ENCODE measurements at regions of chrX and their contacts with region 1.

Region 1: GRCh38 chrX:107716816-107717700 is 58.5 kb downstream of the TSC22D3 start:
- DNase-seq: peak; percentile 64
- ATAC-seq: peak; percentile 71
- H3K4me3 ChIP-seq: peak overlapping the region; percentile 81
- H3K27ac ChIP-seq: peak overlapping the region; percentile 86
- H3K4me1 ChIP-seq: peaks cover 17% of the 10 kb centered on the region
- H3K27me3 ChIP-seq: no peaks in the 10 kb centered on the region; a peak in 1 of 4 replicates
- CTCF ChIP-seq: no peak
- EP300 ChIP-seq: peak; percentile 56 to 73; a peak in 2 of 4 replicates
- POLR2A ChIP-seq: peak; percentile 98
- RAD21 ChIP-seq: no peak

Region 2: DNA sequence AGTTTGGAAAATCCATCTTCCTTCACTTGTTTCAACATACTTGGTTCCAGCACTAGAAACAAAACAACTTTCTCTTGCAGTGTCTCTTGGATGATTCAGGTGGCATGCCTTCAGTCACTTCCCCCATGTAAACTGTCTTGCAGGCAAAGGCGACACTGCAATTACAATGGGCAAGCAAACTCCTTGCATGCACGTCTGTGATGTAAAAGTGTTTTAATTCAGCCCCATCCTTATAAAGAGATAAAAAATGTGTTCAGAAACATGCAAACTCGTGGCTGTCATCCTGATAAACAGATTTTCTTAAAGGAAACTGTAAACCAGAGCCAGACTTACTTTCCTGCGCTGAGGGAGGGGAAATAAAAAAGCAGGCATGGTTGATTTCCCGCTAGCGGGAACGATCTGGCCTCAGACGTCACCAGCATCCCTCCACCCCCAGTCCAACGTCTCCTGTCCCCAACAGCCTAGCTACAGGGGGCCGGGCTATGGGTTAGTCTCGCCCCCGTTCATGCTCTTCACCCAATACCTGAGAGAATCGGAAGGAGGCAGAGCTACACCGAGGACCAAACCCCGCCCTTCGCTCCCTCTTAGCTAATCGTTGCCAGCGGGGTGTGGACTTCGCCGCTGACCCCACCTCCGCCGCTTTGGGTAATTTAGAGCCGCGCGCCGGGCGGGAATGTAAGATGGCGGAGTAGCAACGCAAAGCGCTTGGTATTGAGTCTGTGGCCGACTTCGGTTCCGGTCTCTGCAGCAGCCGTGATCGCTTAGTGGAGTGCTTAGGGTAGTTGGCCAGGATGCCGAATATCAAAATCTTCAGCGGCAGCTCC is 89.0 kb before region 1 on chrX and contains the start of gene PRPS1:
- CTCF ChIA-PET with region 1: no interaction called
- POLR2A ChIA-PET with region 1: no interaction called
- RAD21 ChIA-PET with region 1: interaction called, 12 read pairs
- SMC1A ChIA-PET with region 1: interaction called, 6 read pairs
- in situ Hi-C with region 1: no loop called
- intact Hi-C with region 1: no loop called
- DNase-seq: peak; percentile 75
- ATAC-seq: peak; percentile 98
- H3K4me3 ChIP-seq: peak within 1 kb of the TSS; percentile 74
- H3K27ac ChIP-seq: peak within 1 kb of the TSS; percentile 73
- H3K4me1 ChIP-seq: no peaks in the 10 kb centered on the region
- H3K27me3 ChIP-seq: no peaks in the 10 kb centered on the region
- CTCF ChIP-seq: no peak
- EP300 ChIP-seq: no peak
- POLR2A ChIP-seq: peak; percentile 83
- RAD21 ChIP-seq: no peak
- polyA plus RNA-seq, gene PRPS1: 31.2 to 31.5 TPM

Region 3: GRCh38 chrX:107672955-107673378 is 44.1 kb before region 1 on chrX:
- CTCF ChIA-PET with region 1: interaction called, 273 read pairs
- POLR2A ChIA-PET with region 1: interaction called, 287 read pairs
- RAD21 ChIA-PET with region 1: interaction called, 444 read pairs
- SMC1A ChIA-PET with region 1: interaction called, 425 read pairs
- in situ Hi-C with region 1: loop called (anchors 5 kb)
- intact Hi-C with region 1: loop called (anchors 1 kb)
- DNase-seq: no peak
- ATAC-seq: peak; percentile 61
- H3K4me3 ChIP-seq: no peak overlapping the region
- H3K27ac ChIP-seq: peak overlapping the region; percentile 57
- H3K4me1 ChIP-seq: peaks cover 16% of the 10 kb centered on the region
- H3K27me3 ChIP-seq: no peaks in the 10 kb centered on the region
- CTCF ChIP-seq: peak; percentile 72 to 80 (median 73)
- EP300 ChIP-seq: no peak
- POLR2A ChIP-seq: no peak
- RAD21 ChIP-seq: peak; percentile 74

Region 4: GRCh38 chrX:107701493-107702121 is 15.5 kb before region 1 on chrX:
- CTCF ChIA-PET with region 1: interaction called, 13 read pairs
- POLR2A ChIA-PET with region 1: interaction called, 12 read pairs
- RAD21 ChIA-PET with region 1: interaction called, 24 read pairs
- SMC1A ChIA-PET with region 1: interaction called, 26 read pairs
- in situ Hi-C with region 1: no loop called
- intact Hi-C with region 1: no loop called
- DNase-seq: no peak
- ATAC-seq: peak; percentile 87
- H3K4me3 ChIP-seq: no peak overlapping the region
- H3K27ac ChIP-seq: peak overlapping the region; percentile 46
- H3K4me1 ChIP-seq: peaks cover 24% of the 10 kb centered on the region; the same call in 1 of the 2 replicates
- H3K27me3 ChIP-seq: no peaks in the 10 kb centered on the region
- CTCF ChIP-seq: no peak
- EP300 ChIP-seq: no peak
- POLR2A ChIP-seq: no peak
- RAD21 ChIP-seq: no peak

Region 5: DNA sequence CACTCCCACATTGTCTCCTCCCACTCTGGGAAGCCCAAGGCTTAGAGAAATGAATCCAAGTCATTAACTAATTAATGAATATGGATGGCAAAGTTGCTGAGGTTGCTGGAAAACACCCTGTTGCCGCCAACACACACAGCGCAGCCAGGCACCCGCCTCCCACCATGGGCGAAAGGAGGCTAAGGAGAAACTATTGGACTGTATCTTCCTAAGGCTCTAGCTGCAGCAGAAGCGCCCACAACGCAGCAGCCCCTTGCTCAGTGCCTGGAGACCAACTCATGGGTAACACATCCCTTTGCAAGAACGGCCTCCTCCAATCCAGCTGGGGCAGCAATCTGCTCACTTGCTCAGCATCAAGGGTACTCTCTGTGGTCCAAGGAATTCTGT is 24.3 kb after region 1 on chrX:
- CTCF ChIA-PET with region 1: interaction called, 12 read pairs
- POLR2A ChIA-PET with region 1: interaction called, 3 read pairs
- RAD21 ChIA-PET with region 1: interaction called, 3 read pairs
- SMC1A ChIA-PET with region 1: interaction called, 5 read pairs
- in situ Hi-C with region 1: no loop called
- intact Hi-C with region 1: no loop called
- DNase-seq: no peak
- ATAC-seq: no peak
- H3K4me3 ChIP-seq: peak overlapping the region; percentile 32; the same call in 1 of the 2 replicates
- H3K27ac ChIP-seq: no peak overlapping the region
- H3K4me1 ChIP-seq: peaks cover 6% of the 10 kb centered on the region
- H3K27me3 ChIP-seq: no peaks in the 10 kb centered on the region; a peak in 1 of 4 replicates
- CTCF ChIP-seq: no peak
- EP300 ChIP-seq: no peak
- POLR2A ChIP-seq: no peak
- RAD21 ChIP-seq: no peak

Region 6: GRCh38 chrX:107804427-107804826 is 87.4 kb after region 1 on chrX:
- CTCF ChIA-PET with region 1: no interaction called
- POLR2A ChIA-PET with region 1: no interaction called
- RAD21 ChIA-PET with region 1: no interaction called
- SMC1A ChIA-PET with region 1: no interaction called
- in situ Hi-C with region 1: no loop called
- intact Hi-C with region 1: no loop called
- DNase-seq: no peak
- ATAC-seq: no peak
- H3K4me3 ChIP-seq: no peak overlapping the region
- H3K27ac ChIP-seq: no peak overlapping the region
- H3K4me1 ChIP-seq: no peaks in the 10 kb centered on the region
- H3K27me3 ChIP-seq: no peaks in the 10 kb centered on the region
- CTCF ChIP-seq: no peak
- EP300 ChIP-seq: no peak
- POLR2A ChIP-seq: no peak
- RAD21 ChIP-seq: no peak

Region 7: DNA sequence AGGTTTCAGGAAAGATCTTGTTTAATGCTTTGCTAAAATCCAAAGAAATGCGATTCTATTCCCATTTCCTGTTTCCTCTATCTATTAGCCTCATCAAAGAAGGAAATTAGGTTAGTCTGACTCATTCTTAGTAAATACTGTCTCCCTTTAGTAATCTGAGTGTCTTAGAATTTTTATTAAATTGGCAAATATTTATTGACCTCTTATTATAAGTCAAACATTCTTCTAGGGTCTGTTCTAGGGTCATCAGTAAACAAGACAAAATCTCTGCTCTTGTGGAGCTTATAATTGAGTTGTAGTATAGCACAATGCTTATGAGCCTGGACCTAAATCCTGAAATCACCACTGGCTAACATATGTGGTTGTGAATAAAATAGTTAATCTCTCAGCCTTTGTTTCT is 97.7 kb after region 1 on chrX:
- CTCF ChIA-PET with region 1: no interaction called
- POLR2A ChIA-PET with region 1: no interaction called
- RAD21 ChIA-PET with region 1: no interaction called
- SMC1A ChIA-PET with region 1: no interaction called
- in situ Hi-C with region 1: no loop called
- intact Hi-C with region 1: no loop called
- DNase-seq: no peak
- ATAC-seq: no peak
- H3K4me3 ChIP-seq: no peak overlapping the region
- H3K27ac ChIP-seq: no peak overlapping the region
- H3K4me1 ChIP-seq: no peaks in the 10 kb centered on the region
- H3K27me3 ChIP-seq: no peaks in the 10 kb centered on the region
- CTCF ChIP-seq: no peak
- EP300 ChIP-seq: no peak
- POLR2A ChIP-seq: no peak
- RAD21 ChIP-seq: no peak